CD8-positive, alpha-beta memory T cell (primary cell): ENCODE measurements at regions of chr22 and their contacts with region 1.

Region 1: DNA sequence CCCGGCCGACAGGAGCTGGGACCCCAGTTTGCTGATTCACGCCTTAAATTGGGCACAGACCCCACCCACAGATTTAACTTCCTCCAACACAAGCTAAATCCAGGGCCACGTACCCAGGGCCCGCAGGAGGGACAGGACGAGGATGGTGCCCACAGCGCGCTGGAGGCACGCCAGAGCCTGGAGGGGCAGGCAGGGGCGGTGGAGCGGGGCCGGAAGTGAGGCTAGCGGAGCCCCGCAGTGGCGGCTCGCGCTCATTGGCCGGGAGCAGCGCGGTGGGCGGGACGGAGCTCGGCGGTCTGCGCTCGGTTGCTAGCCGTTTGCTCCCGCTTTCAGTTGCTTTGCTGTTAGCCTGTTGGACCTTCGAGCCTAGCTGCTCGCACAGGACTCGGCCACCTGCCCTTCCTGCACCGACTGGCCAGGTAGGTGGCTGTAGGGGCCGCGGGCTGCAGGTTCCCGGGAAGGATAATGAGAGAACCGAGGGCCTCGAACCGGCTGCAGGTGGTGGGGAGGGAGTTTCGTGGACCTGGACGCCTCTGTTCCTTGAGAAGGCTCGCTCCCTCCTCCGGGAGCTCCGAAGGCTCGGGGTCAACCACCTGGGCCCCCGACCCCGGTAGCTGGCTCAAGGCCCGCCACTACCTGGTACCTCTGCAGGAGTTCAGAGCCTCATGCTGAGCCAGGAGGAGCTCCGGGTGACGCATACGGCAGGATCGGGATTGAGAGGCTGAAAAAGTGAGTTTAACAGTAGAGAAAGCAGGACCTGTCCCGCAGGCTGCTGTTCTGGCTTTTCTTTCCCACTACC is at the start of gene CCDC134:
- DNase-seq: peak; percentile 88 to 94 (median 91)
- H3K4me3 ChIP-seq: peak within 1 kb of the TSS; percentile 96
- H3K4me3 Mint-ChIP-seq: peak within 1 kb of the TSS; percentile 87 to 99 (median 94)
- H3K27ac ChIP-seq: peak within 1 kb of the TSS; percentile 96
- H3K27ac Mint-ChIP-seq: peak within 1 kb of the TSS; percentile 89 to 100 (median 98)
- H3K4me1 ChIP-seq: peaks cover 33% of the 10 kb centered on the region
- H3K4me1 Mint-ChIP-seq: peaks cover 28 to 58% (median 44%) of the 10 kb centered on the region in 3 donors
- H3K27me3 ChIP-seq: no peaks in the 10 kb centered on the region
- H3K27me3 Mint-ChIP-seq: no peaks in the 10 kb centered on the region
- total RNA-seq, gene CCDC134: 17.9 to 19.9 TPM

Region 2: GRCh38 chr22:41697126-41697775 is 103.3 kb before region 1 on chr22:
- CTCF ChIA-PET with region 1: interaction called, 21 read pairs
- POLR2A ChIA-PET with region 1: interaction called, 4 read pairs
- DNase-seq: peak; percentile 76 to 94 (median 89)
- H3K4me3 ChIP-seq: peak overlapping the region; percentile 30
- H3K4me3 Mint-ChIP-seq: peak overlapping the region in 6 of 7 donors; percentile 12 to 76 (median 58)
- H3K27ac ChIP-seq: no peak overlapping the region
- H3K27ac Mint-ChIP-seq: peak overlapping the region in 7 of 8 donors; percentile 64 to 91 (median 87)
- H3K4me1 ChIP-seq: peaks cover 7% of the 10 kb centered on the region
- H3K4me1 Mint-ChIP-seq: peaks cover 9 to 12% (median 11%) of the 10 kb centered on the region in 3 donors
- H3K27me3 ChIP-seq: no peaks in the 10 kb centered on the region
- H3K27me3 Mint-ChIP-seq: peaks cover 0 to 1% of the 10 kb centered on the region in 2 donors

Region 3: DNA sequence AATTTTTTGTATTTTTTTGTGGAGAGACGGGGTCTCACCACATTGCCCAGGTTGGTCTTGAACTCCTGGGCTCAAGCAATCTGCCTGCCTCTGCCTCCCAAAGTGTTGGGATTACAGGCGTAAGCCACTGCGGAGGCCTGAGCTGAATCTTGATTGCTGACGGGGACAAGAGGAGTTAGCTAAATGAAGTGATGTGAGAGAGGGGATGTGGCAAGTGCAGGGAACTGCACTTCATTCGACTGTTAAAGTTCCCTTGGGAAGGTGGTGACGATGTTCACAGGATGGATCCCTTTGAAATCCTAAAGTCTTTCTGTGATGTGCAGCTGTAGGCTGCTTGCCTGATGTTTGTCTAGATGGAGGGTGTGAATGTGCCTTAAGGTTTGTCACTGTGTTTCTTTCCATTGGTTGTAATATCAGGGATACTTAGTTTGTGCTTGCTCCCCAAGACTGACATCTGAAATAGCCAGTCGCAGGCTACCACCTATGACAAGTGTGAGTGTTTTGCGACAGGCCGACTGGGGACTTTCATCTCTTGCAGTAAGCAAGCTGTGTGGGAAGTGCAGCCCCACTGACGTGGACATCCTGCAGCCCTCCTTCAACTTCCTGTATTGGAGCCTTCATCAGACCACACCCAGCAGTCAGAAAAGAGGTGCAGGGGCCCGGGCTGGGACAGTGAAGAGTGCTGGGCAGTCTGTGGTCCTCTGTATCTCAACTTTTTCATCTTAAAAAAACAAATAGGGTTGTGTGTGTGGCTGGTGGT is 19.6 kb before region 1 on chr22:
- CTCF ChIA-PET with region 1: interaction called, 62 read pairs
- POLR2A ChIA-PET with region 1: interaction called, 153 read pairs
- DNase-seq: peak; percentile 83 to 96 (median 93)
- H3K4me3 ChIP-seq: peak overlapping the region; percentile 78
- H3K4me3 Mint-ChIP-seq: peak overlapping the region; percentile 76 to 92 (median 90)
- H3K27ac ChIP-seq: peak overlapping the region; percentile 71
- H3K27ac Mint-ChIP-seq: peak overlapping the region; percentile 97 to 100 (median 100)
- H3K4me1 ChIP-seq: peaks cover 44% of the 10 kb centered on the region
- H3K4me1 Mint-ChIP-seq: peaks cover 38 to 54% (median 50%) of the 10 kb centered on the region in 3 donors
- H3K27me3 ChIP-seq: no peaks in the 10 kb centered on the region
- H3K27me3 Mint-ChIP-seq: no peaks in the 10 kb centered on the region

Region 4: DNA sequence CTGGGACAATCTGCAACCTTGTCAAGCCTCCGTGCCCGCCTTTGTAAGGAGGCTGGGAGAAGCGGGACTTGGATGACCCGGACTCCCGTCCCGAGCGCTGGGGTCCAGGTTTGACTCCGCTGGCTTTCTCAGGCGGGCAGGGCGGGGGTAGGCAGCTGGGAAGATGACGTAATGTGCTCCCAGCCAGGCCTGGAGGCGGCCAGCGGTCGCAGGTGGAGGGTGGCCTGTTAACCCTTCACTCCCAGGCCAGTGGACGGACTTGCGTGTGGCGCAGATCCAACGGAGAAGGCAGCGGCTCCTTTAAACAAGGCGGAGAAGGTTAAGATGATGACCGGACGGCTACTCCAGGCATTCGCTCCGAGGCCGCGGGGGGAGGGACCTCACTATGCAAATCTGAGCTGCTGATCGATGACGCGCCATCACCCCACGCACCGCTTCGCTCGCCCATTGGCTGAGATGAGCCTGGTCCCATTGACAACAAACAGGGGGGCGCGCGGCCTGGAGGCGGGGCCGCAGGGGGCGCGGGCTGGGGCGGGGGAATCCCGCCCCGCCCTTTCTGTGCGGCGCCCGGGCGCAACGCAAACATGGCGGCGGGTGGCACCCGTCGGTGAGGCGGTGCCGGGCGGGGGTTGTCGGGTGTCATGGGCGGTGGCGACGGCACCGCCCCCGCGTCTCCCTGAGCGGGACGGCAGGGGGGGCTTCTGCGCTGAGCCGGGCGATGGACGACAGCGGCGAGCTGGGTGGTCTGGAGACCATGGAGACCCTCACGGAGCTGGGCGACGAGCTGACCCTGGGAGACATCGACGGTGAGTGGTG is 32.2 kb after region 1 on chr22 and contains the start of gene SREBF2:
- CTCF ChIA-PET with region 1: interaction called, 4 read pairs
- POLR2A ChIA-PET with region 1: interaction called, 24 read pairs
- DNase-seq: peak; percentile 97 to 99 (median 98)
- H3K4me3 ChIP-seq: peak within 1 kb of the TSS; percentile 99
- H3K4me3 Mint-ChIP-seq: peak within 1 kb of the TSS; percentile 95 to 99 (median 97)
- H3K27ac ChIP-seq: peak within 1 kb of the TSS; percentile 97
- H3K27ac Mint-ChIP-seq: peak within 1 kb of the TSS; percentile 98 to 100 (median 99)
- H3K4me1 ChIP-seq: peaks cover 24% of the 10 kb centered on the region
- H3K4me1 Mint-ChIP-seq: peaks cover 21 to 46% (median 35%) of the 10 kb centered on the region in 3 donors
- H3K27me3 ChIP-seq: no peaks in the 10 kb centered on the region
- H3K27me3 Mint-ChIP-seq: no peaks in the 10 kb centered on the region
- total RNA-seq, gene SREBF2: 85.1 to 87.1 TPM

Region 5: GRCh38 chr22:41998361-41999275 is 198.1 kb after region 1 on chr22 and contains the start of gene WBP2NL:
- CTCF ChIA-PET with region 1: no interaction called
- POLR2A ChIA-PET with region 1: interaction called, 11 read pairs
- DNase-seq: peak; percentile 82 to 92 (median 89)
- H3K4me3 ChIP-seq: peak within 1 kb of the TSS; percentile 71
- H3K4me3 Mint-ChIP-seq: peak within 1 kb of the TSS; percentile 83 to 99 (median 97)
- H3K27ac ChIP-seq: peak within 1 kb of the TSS; percentile 21
- H3K27ac Mint-ChIP-seq: peak within 1 kb of the TSS; percentile 43 to 99 (median 98)
- H3K4me1 ChIP-seq: peaks cover 19% of the 10 kb centered on the region
- H3K4me1 Mint-ChIP-seq: peaks cover 17 to 21% (median 20%) of the 10 kb centered on the region in 3 donors
- H3K27me3 ChIP-seq: no peaks in the 10 kb centered on the region
- H3K27me3 Mint-ChIP-seq: peaks cover 0 to 2% of the 10 kb centered on the region in 2 donors
- total RNA-seq, gene WBP2NL: 0.66 to 0.82 TPM